AG04450 (cell line): ENCODE measurements at regions of chr1 and their contacts with region 1.

Region 1: DNA sequence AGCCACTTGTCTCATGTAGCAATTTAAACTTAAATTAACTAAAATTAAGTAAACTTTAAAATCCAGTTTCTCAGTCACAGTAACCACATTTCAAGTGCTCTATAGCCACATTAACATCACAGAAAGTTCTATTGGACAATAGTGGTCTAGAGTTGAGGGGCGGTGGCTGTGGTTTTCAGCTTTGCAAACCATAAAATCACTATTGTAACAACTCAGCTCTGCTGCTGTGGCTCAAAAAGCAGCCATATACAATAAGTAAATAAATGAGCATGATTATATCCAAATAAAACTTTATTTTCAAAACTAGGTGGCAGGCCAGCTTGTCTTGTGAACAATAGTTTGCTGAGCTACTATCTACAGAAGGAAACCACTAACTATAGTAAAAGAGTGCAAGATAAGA is 43.4 kb upstream of the C1orf53 start:
- DNase-seq: no peak
- H3K4me3 ChIP-seq: no peak overlapping the region
- H3K27ac ChIP-seq: no peak overlapping the region
- H3K27me3 ChIP-seq: no peaks in the 10 kb centered on the region
- CTCF ChIP-seq: no peak

Region 2: GRCh38 chr1:197811769-197812168 is 47.3 kb before region 1 on chr1:
- CTCF ChIA-PET with region 1: no interaction called
- POLR2A ChIA-PET with region 1: no interaction called
- DNase-seq: no peak
- H3K4me3 ChIP-seq: no peak overlapping the region
- H3K27ac ChIP-seq: no peak overlapping the region
- H3K27me3 ChIP-seq: no peaks in the 10 kb centered on the region
- CTCF ChIP-seq: no peak

Region 3: DNA sequence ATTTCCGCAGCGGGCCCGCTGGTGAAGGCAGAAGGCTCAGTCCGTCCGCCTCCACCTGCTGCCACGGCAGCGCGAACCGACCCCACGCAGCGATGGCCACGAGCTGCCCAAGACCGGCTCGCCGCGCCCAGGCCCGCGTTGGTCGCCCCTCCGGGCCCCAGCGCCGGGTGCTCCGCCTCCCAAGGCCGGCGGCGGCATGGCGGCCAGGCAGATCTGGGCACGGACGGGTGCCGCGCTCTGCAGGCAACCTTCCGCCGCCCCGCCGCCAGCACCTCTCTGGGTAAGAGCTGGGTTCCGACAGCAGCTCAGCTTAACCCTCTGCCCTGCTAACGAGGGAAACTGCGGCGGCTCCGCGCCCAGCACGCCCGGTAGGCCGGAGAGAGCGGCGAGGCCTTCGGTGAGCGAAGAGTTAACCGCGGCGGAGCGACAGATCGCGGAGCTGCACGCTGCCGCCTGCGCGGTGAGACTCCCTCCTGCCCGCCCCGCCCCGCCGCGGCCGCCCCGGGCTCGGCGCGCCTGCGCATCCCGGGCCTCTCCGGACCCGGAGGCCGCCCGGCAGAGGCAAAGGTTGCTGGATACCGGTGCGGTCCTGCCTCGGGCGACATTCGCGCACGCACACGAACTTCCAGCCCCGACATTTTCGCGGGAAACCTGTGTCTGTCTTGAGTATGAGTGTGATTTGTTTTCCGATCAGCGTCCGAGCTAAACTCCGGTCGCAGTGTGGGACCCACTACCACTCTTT is 43.6 kb after region 1 on chr1 and contains the start of gene C1orf53:
- CTCF ChIA-PET with region 1: no interaction called
- POLR2A ChIA-PET with region 1: interaction called, 11 read pairs
- DNase-seq: peak; percentile 61
- H3K4me3 ChIP-seq: peak within 1 kb of the TSS; percentile 87
- H3K27ac ChIP-seq: peak within 1 kb of the TSS; percentile 77
- H3K27me3 ChIP-seq: peaks cover 6% of the 10 kb centered on the region
- CTCF ChIP-seq: no peak
- polyA plus RNA-seq, gene C1orf53: 6.2 and 6.4 TPM in 2 replicates